Activated CD4-positive, alpha-beta T cell treated with anti-CD3 and anti-CD28 coated beads for 36 hours (primary cell): ENCODE measurements at regions of chr2 and their contacts with region 1.

Region 1: GRCh38 chr2:218269899-218270720 is at the starts of genes AAMP and PNKD:
- DNase-seq: peak; percentile 100
- ATAC-seq: peak; percentile 92
- H3K4me3 Mint-ChIP-seq: peak within 1 kb of the TSS; percentile 88
- H3K27ac Mint-ChIP-seq: peak within 1 kb of the TSS; percentile 86
- H3K4me1 Mint-ChIP-seq: peaks cover 34% of the 10 kb centered on the region
- H3K27me3 Mint-ChIP-seq: no peaks in the 10 kb centered on the region
- total RNA-seq, gene AAMP: 49.7 to 72.2 TPM
- total RNA-seq, gene PNKD: 17.8 to 18.5 TPM

Region 2: GRCh38 chr2:218125626-218126080 is 144.5 kb before region 1 on chr2 and contains the start of gene CXCR2:
- CTCF ChIA-PET with region 1: no interaction called
- POLR2A ChIA-PET with region 1: no interaction called
- intact Hi-C with region 1: no loop called
- DNase-seq: no peak
- ATAC-seq: no peak
- H3K4me3 Mint-ChIP-seq: no peak within 1 kb of the TSS
- H3K27ac Mint-ChIP-seq: no peak within 1 kb of the TSS
- H3K4me1 Mint-ChIP-seq: peaks cover 9% of the 10 kb centered on the region
- H3K27me3 Mint-ChIP-seq: peaks cover 6% of the 10 kb centered on the region
- total RNA-seq, gene CXCR2: 0.14 to 0.32 TPM

Region 3: GRCh38 chr2:218186355-218186766 is 83.7 kb before region 1 on chr2:
- CTCF ChIA-PET with region 1: interaction called, 4 read pairs
- POLR2A ChIA-PET with region 1: interaction called, 3 read pairs
- intact Hi-C with region 1: loop called (anchors 1 kb)
- DNase-seq: peak; percentile 83
- ATAC-seq: peak; percentile 95
- H3K4me3 Mint-ChIP-seq: no peak overlapping the region
- H3K27ac Mint-ChIP-seq: no peak overlapping the region
- H3K4me1 Mint-ChIP-seq: peaks cover 8% of the 10 kb centered on the region
- H3K27me3 Mint-ChIP-seq: no peaks in the 10 kb centered on the region

Region 4: DNA sequence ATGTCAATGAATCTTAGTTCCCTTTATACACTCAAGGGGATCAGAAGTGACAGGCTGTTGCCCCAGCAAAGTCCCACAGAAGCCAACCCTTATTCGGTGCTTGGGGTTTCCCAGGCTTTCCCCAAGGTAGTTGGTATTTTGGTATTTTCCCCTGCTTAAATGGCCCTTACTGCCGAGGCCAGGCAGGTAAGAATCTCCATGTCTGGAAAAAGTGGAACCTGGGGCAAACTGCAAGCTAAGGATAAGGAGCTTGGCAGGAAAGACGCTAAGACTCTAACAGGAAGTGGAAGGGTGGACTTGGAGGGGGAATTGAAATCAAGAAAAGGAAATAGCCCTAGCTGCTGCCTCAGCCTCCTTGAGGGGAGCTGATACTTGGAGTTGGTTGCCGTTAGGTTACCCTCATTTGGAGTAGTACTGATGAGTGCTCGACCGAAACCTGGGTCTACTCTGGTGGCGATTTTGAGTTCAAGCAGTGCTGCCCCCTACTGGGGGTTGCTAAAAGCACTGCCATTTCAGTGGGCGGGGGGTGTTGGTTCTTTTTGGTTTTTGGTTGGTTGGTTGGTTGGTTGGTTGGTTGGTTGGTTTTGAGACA is 12.6 kb before region 1 on chr2:
- CTCF ChIA-PET with region 1: interaction called, 40 read pairs
- POLR2A ChIA-PET with region 1: interaction called, 5 read pairs
- intact Hi-C with region 1: no loop called
- DNase-seq: peak; percentile 85
- ATAC-seq: peak; percentile 75
- H3K4me3 Mint-ChIP-seq: no peak overlapping the region
- H3K27ac Mint-ChIP-seq: peak overlapping the region; percentile 81
- H3K4me1 Mint-ChIP-seq: peaks cover 38% of the 10 kb centered on the region
- H3K27me3 Mint-ChIP-seq: no peaks in the 10 kb centered on the region

Region 5: GRCh38 chr2:218360447-218360846 is 90.3 kb after region 1 on chr2:
- CTCF ChIA-PET with region 1: interaction called, 24 read pairs
- POLR2A ChIA-PET with region 1: no interaction called
- intact Hi-C with region 1: loop called in 1 of 2 experiments (anchors 1 kb)
- DNase-seq: no peak
- ATAC-seq: no peak
- H3K4me3 Mint-ChIP-seq: no peak overlapping the region
- H3K27ac Mint-ChIP-seq: no peak overlapping the region
- H3K4me1 Mint-ChIP-seq: no peaks in the 10 kb centered on the region
- H3K27me3 Mint-ChIP-seq: no peaks in the 10 kb centered on the region

Region 6: GRCh38 chr2:218448934-218449333 is 178.8 kb after region 1 on chr2:
- CTCF ChIA-PET with region 1: no interaction called
- POLR2A ChIA-PET with region 1: no interaction called
- intact Hi-C with region 1: no loop called
- DNase-seq: no peak
- ATAC-seq: no peak
- H3K4me3 Mint-ChIP-seq: no peak overlapping the region
- H3K27ac Mint-ChIP-seq: no peak overlapping the region
- H3K4me1 Mint-ChIP-seq: no peaks in the 10 kb centered on the region
- H3K27me3 Mint-ChIP-seq: no peaks in the 10 kb centered on the region

Region 7: GRCh38 chr2:218659258-218659987 is 389.3 kb after region 1 on chr2 and contains the starts of genes BCS1L and ZNF142:
- CTCF ChIA-PET with region 1: no interaction called
- POLR2A ChIA-PET with region 1: no interaction called
- intact Hi-C with region 1: loop called in 1 of 2 experiments (anchors 2 kb)
- DNase-seq: peak; percentile 98
- ATAC-seq: peak; percentile 95
- H3K4me3 Mint-ChIP-seq: peak within 1 kb of the TSS; percentile 88
- H3K27ac Mint-ChIP-seq: peak within 1 kb of the TSS; percentile 89
- H3K4me1 Mint-ChIP-seq: peaks cover 35% of the 10 kb centered on the region
- H3K27me3 Mint-ChIP-seq: no peaks in the 10 kb centered on the region
- total RNA-seq, gene BCS1L: 74.3 to 92.3 TPM
- total RNA-seq, gene ZNF142: 31.5 to 42.4 TPM

Region 8: DNA sequence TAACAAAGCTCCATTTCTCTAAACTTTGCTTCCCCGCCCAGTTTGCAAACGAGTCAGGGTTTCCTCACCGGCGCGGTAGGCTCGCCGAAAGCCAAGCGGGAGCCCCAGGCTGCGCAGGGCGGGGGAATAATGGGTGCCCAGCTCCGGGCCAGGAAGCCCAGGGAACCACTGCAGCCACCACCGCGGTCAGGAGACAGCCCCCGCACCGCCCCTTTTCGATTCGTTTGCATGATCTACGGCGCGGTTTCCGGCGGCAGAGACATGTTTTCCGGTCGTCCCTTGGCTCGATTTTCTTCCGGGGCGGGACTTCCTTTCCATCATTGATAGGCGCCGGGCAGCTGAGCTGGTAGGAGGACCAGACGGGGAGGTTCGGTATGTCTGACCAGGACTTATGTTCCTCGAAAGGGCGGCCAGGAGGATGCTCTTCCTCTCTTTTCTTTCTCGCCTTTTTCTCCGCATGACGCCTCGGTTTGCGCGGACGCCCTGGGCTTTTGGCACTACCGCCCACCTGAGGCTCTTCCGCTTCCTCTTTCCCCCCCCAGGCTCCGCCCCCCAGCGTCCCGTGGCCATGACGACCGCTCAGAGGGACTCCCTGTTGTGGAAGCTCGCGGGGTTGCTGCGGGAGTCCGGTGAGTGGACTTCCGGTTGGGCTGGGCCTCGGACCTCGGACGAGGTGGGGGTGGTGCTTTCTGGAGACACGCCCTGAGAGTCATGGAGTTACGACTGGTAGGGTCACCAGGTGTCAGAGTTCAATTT is 1327.6 kb after region 1 on chr2 and contains the start of gene STK11IP:
- CTCF ChIA-PET with region 1: no interaction called
- POLR2A ChIA-PET with region 1: no interaction called
- intact Hi-C with region 1: loop called in 1 of 2 experiments (anchors 2 kb)
- DNase-seq: peak; percentile 95
- ATAC-seq: peak; percentile 91
- H3K4me3 Mint-ChIP-seq: peak within 1 kb of the TSS; percentile 82
- H3K27ac Mint-ChIP-seq: peak within 1 kb of the TSS; percentile 97
- H3K4me1 Mint-ChIP-seq: peaks cover 16% of the 10 kb centered on the region
- H3K27me3 Mint-ChIP-seq: peaks cover 4% of the 10 kb centered on the region
- total RNA-seq, gene STK11IP: 23.5 to 26.1 TPM